CD4-positive, alpha-beta memory T cell (primary cell): ENCODE measurements at regions of chr3 and their contacts with region 1.

Region 1: GRCh38 chr3:32901432-32902409 is 49.7 kb upstream of the CCR4 start:
- DNase-seq: peak in 3 of 5 donors; percentile 4 to 27 (median 22)
- H3K4me3 ChIP-seq: peak overlapping the region in 1 of 2 donors; percentile 24
- H3K4me3 Mint-ChIP-seq: peak overlapping the region; percentile 45 to 84 (median 69)
- H3K27ac ChIP-seq: no peak overlapping the region
- H3K27ac Mint-ChIP-seq: no peak overlapping the region
- H3K4me1 ChIP-seq: peaks cover 3% of the 10 kb centered on the region
- H3K4me1 Mint-ChIP-seq: peaks cover 1 to 6% (median 4%) of the 10 kb centered on the region in 4 donors
- H3K27me3 ChIP-seq: no peaks in the 10 kb centered on the region
- H3K27me3 Mint-ChIP-seq: peaks cover 8 to 10% of the 10 kb centered on the region in 2 donors

Region 2: GRCh38 chr3:32733631-32734229 is 168.0 kb before region 1 on chr3:
- CTCF ChIA-PET with region 1: no interaction called
- POLR2A ChIA-PET with region 1: no interaction called
- intact Hi-C with region 1: loop called (anchors 1 kb)
- DNase-seq: peak in 3 of 5 donors; percentile 16 to 22 (median 21)
- H3K4me3 ChIP-seq: no peak overlapping the region
- H3K4me3 Mint-ChIP-seq: no peak overlapping the region
- H3K27ac ChIP-seq: no peak overlapping the region
- H3K27ac Mint-ChIP-seq: no peak overlapping the region
- H3K4me1 ChIP-seq: no peaks in the 10 kb centered on the region
- H3K4me1 Mint-ChIP-seq: peaks cover 0 to 1% (median 0%) of the 10 kb centered on the region in 4 donors
- H3K27me3 ChIP-seq: no peaks in the 10 kb centered on the region
- H3K27me3 Mint-ChIP-seq: no peaks in the 10 kb centered on the region